AG04449 (cell line): ENCODE measurements at regions of chr7 and their contacts with region 1.

Region 1: GRCh38 chr7:94449148-94449725 is 54.5 kb downstream of the COL1A2 start:
- DNase-seq: no peak
- H3K4me3 ChIP-seq: no peak overlapping the region
- CTCF ChIP-seq: peak; percentile 28

Region 2: GRCh38 chr7:94426980-94427875 is 22.0 kb before region 1 on chr7:
- CTCF ChIA-PET with region 1: no interaction called
- POLR2A ChIA-PET with region 1: no interaction called
- DNase-seq: no peak
- H3K4me3 ChIP-seq: no peak overlapping the region
- CTCF ChIP-seq: no peak

Region 3: DNA sequence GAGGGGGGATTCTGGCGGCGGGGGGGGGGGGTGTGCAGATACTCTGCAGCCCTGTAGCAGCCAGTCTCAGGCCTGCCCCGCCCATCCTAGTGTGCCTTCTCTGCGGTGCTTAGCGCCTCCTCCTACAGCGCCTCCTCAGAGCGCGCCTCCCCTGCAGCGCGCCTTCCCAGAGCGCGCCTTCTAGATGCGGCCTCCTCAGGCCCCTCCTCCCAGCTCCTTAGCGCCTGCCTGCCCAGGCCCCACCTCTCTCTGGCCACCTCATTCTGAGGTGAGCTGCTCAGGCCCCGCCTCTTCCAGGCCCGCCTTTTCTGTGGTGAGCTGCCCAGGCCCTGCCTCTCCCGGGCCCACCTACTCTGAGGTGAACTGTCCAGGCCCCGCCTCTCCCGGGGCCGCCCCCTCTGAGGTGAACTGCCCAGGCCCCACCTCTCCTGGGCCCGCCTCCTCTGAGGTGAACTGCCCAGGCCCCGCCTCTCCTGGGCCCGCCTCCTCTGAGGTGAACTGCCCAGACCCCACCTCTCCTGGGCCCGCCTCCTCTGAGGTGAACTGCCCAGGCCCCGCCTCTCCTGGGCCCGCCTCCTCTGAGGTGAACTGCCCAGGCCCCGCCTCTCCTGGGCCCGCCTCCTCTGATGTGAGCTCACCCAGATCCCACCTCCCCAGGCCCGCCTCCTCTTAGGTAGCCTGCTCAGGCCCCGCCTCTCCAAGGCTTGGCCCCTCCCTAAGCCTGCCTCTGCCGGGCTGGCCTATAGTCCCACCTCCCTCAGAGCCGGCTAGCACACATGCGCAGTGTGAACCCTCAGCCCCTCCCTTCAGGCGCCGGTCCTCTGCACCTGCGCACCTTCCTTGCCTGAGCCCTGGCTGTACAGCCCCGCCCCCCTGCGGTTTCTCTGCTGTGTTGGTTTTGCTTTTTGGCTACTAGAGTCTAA is 208.8 kb after region 1 on chr7:
- CTCF ChIA-PET with region 1: interaction called, 46 read pairs
- POLR2A ChIA-PET with region 1: interaction called, 3 read pairs
- DNase-seq: peak; percentile 50
- H3K4me3 ChIP-seq: peak overlapping the region; percentile 75
- CTCF ChIP-seq: no peak

Region 4: GRCh38 chr7:95199779-95200558 is 750.7 kb after region 1 on chr7:
- CTCF ChIA-PET with region 1: interaction called, 73 read pairs
- POLR2A ChIA-PET with region 1: no interaction called
- DNase-seq: no peak
- H3K4me3 ChIP-seq: no peak overlapping the region
- CTCF ChIP-seq: peak; percentile 60

Region 5: DNA sequence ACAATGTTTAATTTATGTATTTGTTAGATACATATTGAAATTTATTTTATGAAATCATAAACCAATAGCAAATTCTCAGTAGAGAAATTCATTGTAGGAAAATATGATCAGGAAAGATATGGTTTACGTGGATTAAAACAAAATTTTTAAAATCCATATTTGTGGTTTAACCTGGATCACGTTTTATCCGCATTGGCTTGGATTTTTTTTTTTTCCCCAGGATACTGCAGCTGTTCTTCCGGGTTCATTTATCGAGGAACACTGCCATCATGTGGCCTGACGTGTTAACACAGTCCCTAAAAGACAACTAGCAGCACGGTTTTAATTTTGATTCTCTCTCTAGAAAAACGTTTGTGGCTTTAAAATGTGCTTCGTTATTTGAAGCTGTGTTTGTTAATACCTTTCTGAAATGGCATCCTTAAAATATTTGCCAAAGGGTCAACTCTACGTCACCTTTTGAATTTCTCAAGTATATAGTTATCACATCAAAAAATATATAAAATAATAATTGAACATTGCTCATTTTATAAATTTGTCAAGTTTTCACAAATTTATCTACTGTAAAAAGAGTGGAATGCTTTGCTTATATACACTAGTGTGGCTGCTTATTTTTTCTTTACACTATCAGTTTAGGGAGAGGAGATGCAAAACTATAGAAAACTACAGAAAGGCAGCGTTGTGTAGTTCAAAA is 1027.8 kb after region 1 on chr7:
- CTCF ChIA-PET with region 1: interaction called, 97 read pairs
- POLR2A ChIA-PET with region 1: no interaction called
- DNase-seq: no peak
- H3K4me3 ChIP-seq: no peak overlapping the region
- CTCF ChIP-seq: peak; percentile 55